ENCODE measurements at regions of chr4 and their contacts with region 1.

Region 1: DNA sequence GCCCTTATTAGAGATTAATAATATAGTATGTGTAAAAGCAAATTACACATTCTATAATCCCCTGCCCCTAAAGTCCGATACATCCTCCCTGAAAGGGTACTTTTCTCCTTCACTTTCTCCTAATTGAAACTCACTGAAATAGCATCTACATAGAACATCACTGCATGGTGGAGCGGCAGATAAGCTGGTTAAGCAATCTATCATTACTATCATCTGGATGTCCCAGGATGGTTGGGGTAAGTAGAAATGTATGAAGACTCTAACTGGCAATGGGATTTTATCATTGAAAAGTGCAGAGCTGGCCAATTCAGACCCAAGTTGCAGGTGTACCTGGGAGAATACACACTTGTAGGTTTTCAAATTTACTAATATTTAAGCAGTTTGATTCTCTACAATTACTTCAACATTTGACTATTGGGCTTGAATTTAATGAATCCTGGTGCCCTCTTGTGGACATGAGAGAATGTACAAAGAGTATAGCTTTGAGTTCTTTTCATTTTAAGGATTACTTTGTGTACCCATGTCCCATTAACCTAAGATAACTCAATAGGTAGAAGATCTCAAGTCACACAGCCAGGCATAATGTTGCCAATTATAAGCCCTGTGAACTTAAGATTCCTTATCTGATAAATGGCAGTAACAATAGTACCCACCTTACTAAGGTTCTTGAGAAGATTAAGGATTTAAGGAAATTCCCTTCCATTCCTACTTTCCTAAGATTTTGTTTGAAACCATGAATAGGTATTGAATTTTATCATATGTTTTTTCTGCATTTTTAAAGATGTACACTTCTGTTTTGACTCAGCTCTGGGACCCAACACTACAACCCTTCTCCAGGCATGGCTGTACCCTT is 69.8 kb downstream of the SHROOM3 start:
- DNase-seq: no peak
- H3K4me3 ChIP-seq: no peak overlapping the region
- H3K27ac ChIP-seq: no peak overlapping the region
- H3K4me1 ChIP-seq: no peaks in the 10 kb centered on the region
- H3K27me3 ChIP-seq: no peaks in the 10 kb centered on the region
- CTCF ChIP-seq: peak; percentile 35 to 57 (median 40)
- POLR2A ChIP-seq: no peak

Region 2: DNA sequence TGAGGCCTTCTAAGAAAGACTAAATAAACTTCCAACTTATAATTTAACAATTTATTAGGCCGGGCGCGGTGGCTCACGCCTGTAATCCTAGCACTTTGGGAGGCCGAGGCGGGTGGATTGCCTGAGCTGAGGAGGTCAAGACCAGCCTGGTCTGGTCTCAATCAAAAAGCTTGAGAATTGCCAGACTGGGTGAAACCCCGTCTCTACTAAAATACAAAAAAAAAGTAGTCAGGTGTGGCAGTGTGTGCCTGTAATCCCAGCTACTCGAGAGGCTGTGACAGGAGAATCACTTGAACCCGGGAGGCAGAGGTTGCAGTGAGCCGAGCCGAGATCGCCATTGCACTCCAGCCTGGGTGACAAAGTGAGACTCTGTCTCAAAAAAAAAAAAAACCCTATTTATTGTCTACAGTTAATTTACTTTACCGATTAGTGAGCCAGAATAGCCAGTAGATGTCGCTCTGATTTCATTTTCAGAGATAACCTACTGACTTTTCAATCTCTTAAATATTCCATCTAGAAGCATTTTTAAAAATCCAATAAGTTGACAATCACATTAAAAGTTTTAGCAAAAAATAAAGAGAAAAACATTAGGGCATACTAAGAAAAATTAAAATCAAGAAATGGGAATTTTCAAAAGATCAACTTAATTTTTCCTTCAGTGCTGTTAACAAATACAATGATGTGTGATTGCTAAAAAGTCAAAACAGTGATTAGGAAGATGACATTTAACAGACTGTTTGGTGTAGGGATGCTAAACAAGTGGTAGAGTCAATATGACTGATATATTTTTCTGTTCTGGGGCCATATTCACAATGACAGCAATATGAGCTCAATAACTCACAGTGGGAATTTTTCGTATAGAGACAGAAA is 74.1 kb before region 1 on chr4:
- intact Hi-C with region 1: loop called (anchors 10 kb)
- DNase-seq: no peak
- H3K4me3 ChIP-seq: no peak overlapping the region
- H3K27ac ChIP-seq: no peak overlapping the region
- H3K4me1 ChIP-seq: peaks cover 5% of the 10 kb centered on the region
- H3K27me3 ChIP-seq: no peaks in the 10 kb centered on the region
- CTCF ChIP-seq: peak; percentile 20 to 47 (median 29)
- POLR2A ChIP-seq: no peak

Region 3: GRCh38 chr4:76624241-76624681 is 119.4 kb after region 1 on chr4:
- intact Hi-C with region 1: no loop called
- DNase-seq: no peak
- H3K4me3 ChIP-seq: no peak overlapping the region
- H3K27ac ChIP-seq: peak overlapping the region; percentile 20
- H3K4me1 ChIP-seq: peaks cover 31% of the 10 kb centered on the region
- H3K27me3 ChIP-seq: no peaks in the 10 kb centered on the region
- CTCF ChIP-seq: no peak
- POLR2A ChIP-seq: no peak

Measured in vagina (tissue), 2 donors.